Activated CD4-positive, alpha-beta T cell treated with anti-CD3 and anti-CD28 coated beads for 36 hours (primary cell): ENCODE measurements at regions of chr12 and their contacts with region 1.

Region 1: DNA sequence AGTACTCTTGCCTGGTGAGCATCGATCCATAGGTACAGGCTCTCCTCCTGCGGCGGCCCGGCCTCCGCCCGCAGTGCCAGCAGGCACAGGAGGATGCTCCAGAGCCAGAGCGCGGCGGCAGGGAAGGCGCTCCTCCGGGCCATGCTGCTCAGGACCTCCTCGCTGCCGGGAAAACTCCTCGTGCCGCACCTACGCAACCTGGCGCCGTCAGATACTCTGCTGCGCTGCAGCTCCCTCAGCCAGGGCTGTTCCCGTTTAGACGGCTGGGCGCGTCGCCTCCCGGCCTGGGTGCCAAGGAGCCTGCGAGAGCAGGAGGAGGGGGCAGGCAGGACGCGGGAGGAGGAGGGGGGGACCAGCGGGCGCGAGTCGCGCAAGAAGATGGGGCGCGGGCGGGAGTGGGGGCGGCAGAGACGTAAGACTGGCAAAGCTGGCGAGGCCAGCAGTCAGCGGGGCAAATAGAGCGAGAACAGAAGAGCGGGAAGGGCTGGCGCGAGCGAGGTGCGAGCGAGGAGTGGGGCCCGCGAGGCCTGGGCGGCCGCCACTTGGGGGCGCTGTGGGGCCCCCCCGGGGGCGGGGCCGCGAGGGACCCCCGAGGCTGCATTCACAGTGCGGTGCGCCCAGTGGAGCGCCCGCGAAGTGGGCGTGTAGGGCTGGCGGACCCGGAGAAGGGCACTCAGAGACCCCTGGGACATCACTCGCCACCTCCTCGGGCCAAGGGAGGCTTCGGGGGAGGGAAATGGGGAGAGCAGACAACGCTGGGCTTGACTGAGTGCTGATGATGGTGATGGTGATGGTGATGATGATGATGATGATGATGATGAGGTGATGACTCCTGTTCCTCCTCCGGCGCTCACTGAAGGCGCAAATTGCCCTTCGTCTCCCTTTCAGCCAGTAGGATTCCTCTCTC is at the start of gene WIF1:
- DNase-seq: peak; percentile 56
- ATAC-seq: peak; percentile 82
- H3K4me3 Mint-ChIP-seq: peak within 1 kb of the TSS; percentile 32
- H3K27ac Mint-ChIP-seq: no peak within 1 kb of the TSS
- H3K4me1 Mint-ChIP-seq: peaks cover 6% of the 10 kb centered on the region
- H3K27me3 Mint-ChIP-seq: peaks cover 31% of the 10 kb centered on the region
- total RNA-seq, gene WIF1: not detected

Region 2: DNA sequence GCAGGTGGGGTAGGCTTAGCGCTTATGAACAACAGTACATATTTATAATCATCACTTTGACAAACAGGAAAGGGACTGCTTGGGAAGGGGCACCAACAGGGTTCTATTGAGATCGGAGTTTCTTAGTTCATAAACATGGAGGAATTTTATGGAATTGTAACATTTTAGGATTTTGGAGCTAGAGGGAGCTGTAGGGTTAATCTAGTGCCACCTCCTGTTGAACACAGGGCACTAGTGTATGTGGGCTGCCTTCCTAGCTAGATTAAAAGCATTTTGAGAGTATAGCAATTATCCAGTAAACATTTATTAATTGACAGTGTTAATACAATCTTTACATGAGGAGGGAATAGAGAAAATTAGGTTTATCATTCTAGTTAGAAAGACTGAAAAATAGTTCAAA is 319.9 kb before region 1 on chr12:
- CTCF ChIA-PET with region 1: interaction called, 11 read pairs
- POLR2A ChIA-PET with region 1: no interaction called
- intact Hi-C with region 1: loop called (anchors 1 to 5 kb)
- DNase-seq: no peak
- ATAC-seq: no peak
- H3K4me3 Mint-ChIP-seq: no peak overlapping the region
- H3K27ac Mint-ChIP-seq: no peak overlapping the region
- H3K4me1 Mint-ChIP-seq: no peaks in the 10 kb centered on the region
- H3K27me3 Mint-ChIP-seq: peaks cover 31% of the 10 kb centered on the region

Region 3: GRCh38 chr12:65074932-65075331 is 46.4 kb before region 1 on chr12:
- CTCF ChIA-PET with region 1: no interaction called
- POLR2A ChIA-PET with region 1: no interaction called
- intact Hi-C with region 1: no loop called
- DNase-seq: no peak
- ATAC-seq: no peak
- H3K4me3 Mint-ChIP-seq: no peak overlapping the region
- H3K27ac Mint-ChIP-seq: no peak overlapping the region
- H3K4me1 Mint-ChIP-seq: no peaks in the 10 kb centered on the region
- H3K27me3 Mint-ChIP-seq: peaks cover 22% of the 10 kb centered on the region

Region 4: GRCh38 chr12:65106948-65107347 is 14.4 kb before region 1 on chr12:
- CTCF ChIA-PET with region 1: interaction called, 14 read pairs
- POLR2A ChIA-PET with region 1: no interaction called
- intact Hi-C with region 1: no loop called
- DNase-seq: no peak
- ATAC-seq: no peak
- H3K4me3 Mint-ChIP-seq: no peak overlapping the region
- H3K27ac Mint-ChIP-seq: no peak overlapping the region
- H3K4me1 Mint-ChIP-seq: no peaks in the 10 kb centered on the region
- H3K27me3 Mint-ChIP-seq: peaks cover 11% of the 10 kb centered on the region